HEK293 (cell line): ENCODE measurements at regions of chr19 and their contacts with region 1.

Region 1: GRCh38 chr19:30669329-30670010 is 297.3 kb downstream of the ZNF536 start:
- H3K4me3 ChIP-seq: no peak overlapping the region
- H3K27ac ChIP-seq: no peak overlapping the region
- H3K4me1 ChIP-seq: peaks cover 15% of the 10 kb centered on the region
- CTCF ChIP-seq: peak; percentile 92

Region 2: DNA sequence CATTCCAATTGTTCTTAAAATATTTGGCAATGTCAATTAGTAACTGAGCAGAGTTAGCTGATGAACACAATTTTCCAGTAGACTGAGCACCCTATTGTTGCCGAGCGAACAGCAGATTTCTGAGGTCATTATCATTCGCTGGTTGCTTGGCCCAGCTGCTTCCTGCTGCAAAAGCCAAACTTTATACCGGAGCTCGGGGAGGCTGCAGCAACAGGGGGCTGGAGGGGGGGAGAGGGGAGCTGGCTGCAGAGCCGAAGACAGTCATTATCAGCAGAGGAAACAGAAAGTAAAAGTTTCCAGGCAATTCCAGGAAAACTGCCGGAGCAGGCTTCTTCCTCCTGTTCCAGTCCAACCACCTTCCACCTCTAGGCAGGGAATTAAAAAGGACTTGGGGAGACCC is 219.4 kb before region 1 on chr19:
- CTCF ChIA-PET with region 1: no interaction called
- POLR2A ChIA-PET with region 1: no interaction called
- H3K4me3 ChIP-seq: no peak overlapping the region
- H3K27ac ChIP-seq: no peak overlapping the region
- H3K4me1 ChIP-seq: peaks cover 18% of the 10 kb centered on the region
- CTCF ChIP-seq: no peak

Region 3: DNA sequence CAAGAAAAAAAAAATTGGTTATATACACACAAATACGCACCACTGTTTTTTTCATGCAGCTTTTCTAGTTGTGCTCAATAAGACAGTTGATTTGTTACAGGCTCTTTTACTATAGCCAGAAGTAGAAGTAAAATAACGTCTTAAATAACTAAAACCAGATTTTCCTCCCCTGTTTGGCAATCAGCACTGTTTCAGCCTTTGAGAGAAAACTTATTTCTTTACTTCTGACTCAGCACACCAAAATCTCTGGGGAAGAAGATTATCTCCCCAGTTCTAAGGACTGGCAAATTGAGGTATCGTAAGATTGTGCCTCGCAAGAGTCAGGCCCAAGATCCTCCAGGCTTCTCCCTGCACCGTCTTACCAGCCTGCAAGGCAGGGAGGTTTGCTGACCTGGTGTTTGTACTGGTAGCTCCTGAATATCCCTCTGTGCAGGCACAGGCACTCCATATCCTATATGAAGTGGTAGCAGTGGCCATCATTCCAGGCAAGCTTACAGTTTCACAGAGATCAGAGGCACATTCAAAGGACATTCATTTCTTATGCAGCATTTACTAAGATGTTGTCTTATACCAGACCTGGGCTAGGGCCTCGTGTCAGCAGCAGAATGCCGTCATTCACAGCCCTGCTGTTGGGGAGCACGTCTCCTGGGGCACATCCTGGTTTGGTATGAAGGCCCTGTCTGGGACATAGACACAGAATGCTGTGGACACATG is 29.1 kb before region 1 on chr19:
- CTCF ChIA-PET with region 1: interaction called, 10 read pairs
- POLR2A ChIA-PET with region 1: no interaction called
- H3K4me3 ChIP-seq: no peak overlapping the region
- H3K27ac ChIP-seq: no peak overlapping the region
- H3K4me1 ChIP-seq: no peaks in the 10 kb centered on the region
- CTCF ChIP-seq: no peak

Region 4: DNA sequence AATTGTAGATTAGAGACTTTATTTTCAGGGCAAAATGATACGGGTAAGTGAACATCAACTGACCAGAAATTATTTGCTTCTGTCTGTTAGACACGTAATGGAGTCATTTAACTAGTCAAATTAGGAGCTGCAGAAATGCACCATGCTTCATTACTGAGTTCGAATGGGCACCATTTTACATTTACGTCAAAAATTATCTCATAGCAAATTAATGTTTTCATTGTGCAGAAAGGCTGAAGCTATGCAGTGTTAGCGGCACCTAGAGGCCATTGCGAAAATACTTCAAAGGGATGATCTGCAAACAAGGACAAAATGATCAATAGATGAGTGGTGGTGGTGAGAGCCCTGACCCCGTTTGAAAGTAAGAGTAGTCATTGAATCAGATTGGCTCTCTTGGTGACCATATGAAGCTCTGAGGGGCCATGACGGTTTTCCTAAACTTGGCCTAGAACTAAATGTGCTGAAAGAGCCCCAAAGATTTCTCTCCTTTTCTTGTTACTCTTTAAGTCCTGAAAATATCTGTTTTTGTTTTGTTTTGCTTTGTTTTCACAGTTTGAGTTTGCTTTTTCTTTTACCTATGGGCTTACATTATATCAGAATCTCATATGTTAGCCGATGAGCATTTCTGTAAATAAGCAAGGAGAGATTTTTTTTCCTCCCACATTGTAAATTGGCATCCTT is 19.4 kb before region 1 on chr19:
- CTCF ChIA-PET with region 1: interaction called, 15 read pairs
- POLR2A ChIA-PET with region 1: no interaction called
- H3K4me3 ChIP-seq: no peak overlapping the region
- H3K27ac ChIP-seq: no peak overlapping the region
- H3K4me1 ChIP-seq: peaks cover 4% of the 10 kb centered on the region; the same call in 1 of the 2 replicates
- CTCF ChIP-seq: peak; percentile 89

Region 5: GRCh38 chr19:30784850-30785457 is 115.5 kb after region 1 on chr19:
- CTCF ChIA-PET with region 1: interaction called, 10 read pairs
- POLR2A ChIA-PET with region 1: no interaction called
- H3K4me3 ChIP-seq: no peak overlapping the region
- H3K27ac ChIP-seq: no peak overlapping the region
- H3K4me1 ChIP-seq: no peaks in the 10 kb centered on the region
- CTCF ChIP-seq: peak; percentile 92